ENCODE measurements at regions of chr3 and their contacts with region 1.

Region 1: GRCh38 chr3:48151058-48151806 is 37.0 kb downstream of the CDC25A start:
- DNase-seq: peak; percentile 68 to 82 (median 77)
- H3K4me3 ChIP-seq: no peak overlapping the region
- H3K27ac ChIP-seq: no peak overlapping the region
- H3K4me1 ChIP-seq: peaks cover 3% of the 10 kb centered on the region
- H3K27me3 ChIP-seq: no peaks in the 10 kb centered on the region
- CTCF ChIP-seq: peak; percentile 55 to 79 (median 73)
- EP300 ChIP-seq: no peak
- POLR2A ChIP-seq: no peak

Region 2: GRCh38 chr3:47522082-47522987 is 628.9 kb before region 1 on chr3:
- intact Hi-C with region 1: loop called in 1 of 4 experiments (anchors 10 kb)
- DNase-seq: peak; percentile 77 to 90 (median 85)
- H3K4me3 ChIP-seq: no peak overlapping the region
- H3K27ac ChIP-seq: no peak overlapping the region
- H3K4me1 ChIP-seq: peaks cover 2% of the 10 kb centered on the region
- H3K27me3 ChIP-seq: no peaks in the 10 kb centered on the region
- CTCF ChIP-seq: peak; percentile 90 to 93 (median 91)
- EP300 ChIP-seq: no peak
- POLR2A ChIP-seq: no peak

Region 3: DNA sequence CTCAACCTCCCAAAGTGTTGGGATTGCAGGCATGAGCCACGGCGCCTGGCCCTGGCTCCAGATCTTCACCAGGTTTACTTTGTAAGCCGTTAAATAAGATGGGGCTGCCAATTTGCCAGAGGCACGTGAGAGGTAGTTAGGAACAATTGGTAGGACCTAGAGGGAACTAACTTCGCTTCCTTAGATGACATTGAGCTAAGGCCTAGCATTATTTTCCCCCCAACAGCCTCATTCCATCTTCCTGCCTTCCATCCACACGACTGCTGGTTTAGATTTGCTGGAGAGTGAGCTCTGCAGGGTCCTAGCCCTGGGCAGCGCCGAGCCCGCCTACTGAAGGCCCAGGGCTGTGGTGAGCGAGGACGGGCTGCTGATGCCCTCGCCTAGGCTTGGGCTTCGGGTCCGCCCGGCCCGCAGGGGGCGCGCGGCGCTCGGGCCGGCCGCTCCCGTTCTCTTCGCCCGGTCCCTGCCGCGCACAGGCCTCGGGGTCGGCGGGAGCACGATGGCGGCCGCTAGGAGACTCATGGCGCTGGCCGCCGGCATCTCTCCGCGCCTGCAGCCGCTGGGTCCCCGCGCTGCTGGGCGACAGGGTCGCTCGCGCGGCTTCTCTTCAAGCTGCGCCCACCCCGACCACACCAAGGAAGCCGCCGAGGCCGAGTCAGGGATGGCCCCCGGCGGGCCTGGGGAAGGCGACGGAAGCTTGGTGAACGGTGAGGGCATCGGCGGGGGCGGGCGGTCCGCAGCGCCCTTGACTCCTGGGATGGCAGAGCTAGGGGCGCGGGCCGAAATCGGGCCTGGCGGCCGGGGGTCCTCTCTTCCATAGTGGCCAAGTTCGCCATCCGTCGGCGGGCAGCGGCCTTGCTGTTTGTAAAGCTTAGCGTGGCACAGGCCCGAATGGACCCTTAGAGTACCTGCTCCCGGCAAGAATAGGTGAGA is 326.4 kb before region 1 on chr3:
- intact Hi-C with region 1: loop called in 2 of 4 experiments (anchors 5 to 10 kb)
- DNase-seq: peak; percentile 65 to 86 (median 76)
- H3K4me3 ChIP-seq: peak overlapping the region; percentile 98
- H3K27ac ChIP-seq: peak overlapping the region; percentile 73 to 84
- H3K4me1 ChIP-seq: peaks cover 2% of the 10 kb centered on the region
- H3K27me3 ChIP-seq: no peaks in the 10 kb centered on the region
- CTCF ChIP-seq: peak; percentile 69 to 94 (median 93)
- EP300 ChIP-seq: no peak
- POLR2A ChIP-seq: peak; percentile 26

Region 4: GRCh38 chr3:47836986-47837385 is 314.2 kb before region 1 on chr3:
- intact Hi-C with region 1: loop called in 3 of 4 experiments (anchors 5 to 10 kb)
- DNase-seq: no peak
- H3K4me3 ChIP-seq: no peak overlapping the region
- H3K27ac ChIP-seq: no peak overlapping the region
- H3K4me1 ChIP-seq: no peaks in the 10 kb centered on the region
- H3K27me3 ChIP-seq: no peaks in the 10 kb centered on the region
- CTCF ChIP-seq: no peak
- EP300 ChIP-seq: no peak
- POLR2A ChIP-seq: no peak

Region 5: GRCh38 chr3:47849699-47850563 is 301.3 kb before region 1 on chr3:
- intact Hi-C with region 1: loop called in 1 of 4 experiments (anchors 10 kb)
- DNase-seq: peak in 2 of 5 donors; percentile 37 to 46
- H3K4me3 ChIP-seq: no peak overlapping the region
- H3K27ac ChIP-seq: no peak overlapping the region
- H3K4me1 ChIP-seq: no peaks in the 10 kb centered on the region
- H3K27me3 ChIP-seq: no peaks in the 10 kb centered on the region
- CTCF ChIP-seq: no peak
- EP300 ChIP-seq: no peak
- POLR2A ChIP-seq: no peak

Region 6: GRCh38 chr3:47989981-47990440 is 161.2 kb before region 1 on chr3:
- intact Hi-C with region 1: loop called in 2 of 4 experiments (anchors 5 to 10 kb)
- DNase-seq: peak; percentile 69 to 86 (median 77)
- H3K4me3 ChIP-seq: no peak overlapping the region
- H3K27ac ChIP-seq: no peak overlapping the region
- H3K4me1 ChIP-seq: peaks cover 1% of the 10 kb centered on the region
- H3K27me3 ChIP-seq: no peaks in the 10 kb centered on the region
- CTCF ChIP-seq: peak; percentile 81 to 95 (median 90)
- EP300 ChIP-seq: no peak
- POLR2A ChIP-seq: no peak

Measured in ovary (tissue), 10 donors.